Ovary (tissue), 10 donors: ENCODE measurements at regions of chr19 and their contacts with region 1.

Region 1: GRCh38 chr19:35612559-35613321 is at the start of gene HAUS5:
- DNase-seq: peak; percentile 89 to 97 (median 95)
- H3K4me3 ChIP-seq: peak within 1 kb of the TSS; percentile 77
- H3K27ac ChIP-seq: peak within 1 kb of the TSS; percentile 23 to 85
- H3K4me1 ChIP-seq: peaks cover 5% of the 10 kb centered on the region
- H3K27me3 ChIP-seq: no peaks in the 10 kb centered on the region
- CTCF ChIP-seq: peak in 2 of 3 donors; percentile 46 to 55
- EP300 ChIP-seq: no peak
- POLR2A ChIP-seq: peak; percentile 63
- total RNA-seq, gene HAUS5: 10.6 to 24.5 (median 19.5) TPM

Region 2: GRCh38 chr19:35462476-35462953 is 150.2 kb before region 1 on chr19:
- intact Hi-C with region 1: no loop called
- DNase-seq: no peak
- H3K4me3 ChIP-seq: no peak overlapping the region
- H3K27ac ChIP-seq: no peak overlapping the region
- H3K4me1 ChIP-seq: peaks cover 8% of the 10 kb centered on the region
- H3K27me3 ChIP-seq: no peaks in the 10 kb centered on the region
- CTCF ChIP-seq: no peak
- EP300 ChIP-seq: no peak
- POLR2A ChIP-seq: no peak

Region 3: DNA sequence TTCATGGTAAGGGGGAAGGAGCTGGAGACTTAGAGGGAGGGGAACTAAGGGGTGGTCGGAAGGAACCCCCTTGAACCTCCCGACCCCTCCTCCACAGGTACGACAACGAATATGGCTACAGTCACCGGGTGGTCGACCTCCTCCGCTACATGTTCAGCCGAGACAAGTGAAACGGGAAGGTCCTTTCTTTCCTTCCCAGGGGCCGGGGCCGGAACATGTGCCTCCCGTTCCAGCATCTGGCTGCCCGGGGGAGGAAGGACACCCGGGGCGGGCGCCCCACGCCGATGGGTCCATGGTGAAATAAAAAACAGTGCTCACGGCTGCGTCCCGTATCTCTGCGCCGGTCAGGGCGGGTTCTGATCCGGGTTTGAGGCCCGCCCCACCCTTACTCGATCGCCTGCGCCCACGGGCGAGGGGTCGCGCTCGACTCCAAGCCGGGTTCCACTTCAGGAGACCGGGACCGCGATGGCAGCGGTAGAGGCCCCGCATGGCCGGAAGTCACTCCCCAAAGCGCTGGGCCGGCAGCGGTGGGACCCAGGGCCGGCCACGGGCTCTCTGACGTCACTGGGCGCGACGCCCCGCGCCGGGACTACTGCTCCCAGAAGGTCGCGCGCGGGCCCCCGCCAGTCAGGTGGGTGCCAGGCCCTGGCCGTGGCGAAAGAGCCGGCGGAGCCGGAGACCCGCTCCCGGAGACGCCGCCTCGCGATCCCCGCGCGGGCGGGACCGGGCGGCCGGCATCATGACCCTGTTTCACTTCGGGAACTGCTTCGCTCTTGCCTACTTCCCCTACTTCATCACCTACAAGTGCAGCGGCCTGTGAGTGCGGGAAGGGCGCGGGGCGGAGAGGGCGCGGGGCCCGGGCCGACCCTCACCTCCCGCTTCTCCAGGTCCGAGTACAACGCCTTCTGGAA is 67.5 kb before region 1 on chr19 and contains the start of gene TMEM147:
- intact Hi-C with region 1: loop called in 1 of 4 experiments (anchors 10 kb)
- DNase-seq: peak; percentile 93 to 96 (median 95)
- H3K4me3 ChIP-seq: peak within 1 kb of the TSS; percentile 72
- H3K27ac ChIP-seq: peak within 1 kb of the TSS; percentile 44 to 53
- H3K4me1 ChIP-seq: peaks cover 10% of the 10 kb centered on the region
- H3K27me3 ChIP-seq: no peaks in the 10 kb centered on the region
- CTCF ChIP-seq: no peak
- EP300 ChIP-seq: no peak
- POLR2A ChIP-seq: peak; percentile 58
- total RNA-seq, gene TMEM147: 61.4 to 87.7 (median 66.8) TPM

Region 4: DNA sequence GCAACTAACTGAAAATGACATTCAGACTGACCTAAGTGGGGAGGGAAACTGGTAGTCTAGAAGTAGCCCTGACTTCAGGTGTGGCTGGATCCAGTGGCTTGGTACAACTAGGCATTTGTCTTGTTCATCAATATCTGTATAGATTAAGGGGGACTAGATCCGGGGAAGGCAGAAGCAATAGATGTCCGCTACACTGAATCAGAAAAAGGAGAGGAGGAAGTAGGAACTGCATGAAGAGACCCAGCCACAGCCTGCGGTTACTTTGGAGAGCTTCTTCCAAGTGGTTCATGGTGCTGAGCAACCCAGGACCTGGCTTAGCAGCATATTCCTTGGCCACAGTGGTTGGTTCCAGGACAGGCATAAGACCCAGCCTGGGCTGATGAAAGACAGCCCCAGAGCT is 209.8 kb after region 1 on chr19:
- intact Hi-C with region 1: no loop called
- DNase-seq: no peak
- H3K4me3 ChIP-seq: no peak overlapping the region
- H3K27ac ChIP-seq: no peak overlapping the region
- H3K4me1 ChIP-seq: no peaks in the 10 kb centered on the region
- H3K27me3 ChIP-seq: no peaks in the 10 kb centered on the region
- CTCF ChIP-seq: no peak
- EP300 ChIP-seq: no peak
- POLR2A ChIP-seq: no peak